Esophagus squamous epithelium (tissue), 5 donors: ENCODE measurements at regions of chr5 and their contacts with region 1.

Region 1: GRCh38 chr5:153496835-153497234 is 6.4 kb downstream of the GRIA1 start:
- DNase-seq: no peak
- H3K4me3 ChIP-seq: no peak overlapping the region
- H3K27ac ChIP-seq: no peak overlapping the region
- H3K4me1 ChIP-seq: no peaks in the 10 kb centered on the region
- H3K27me3 ChIP-seq: peaks cover 0 to 7% (median 0%) of the 10 kb centered on the region in 4 donors
- CTCF ChIP-seq: peak in 4 of 6 experiments; percentile 22 to 70 (median 44)
- POLR2A ChIP-seq: no peak

Region 2: DNA sequence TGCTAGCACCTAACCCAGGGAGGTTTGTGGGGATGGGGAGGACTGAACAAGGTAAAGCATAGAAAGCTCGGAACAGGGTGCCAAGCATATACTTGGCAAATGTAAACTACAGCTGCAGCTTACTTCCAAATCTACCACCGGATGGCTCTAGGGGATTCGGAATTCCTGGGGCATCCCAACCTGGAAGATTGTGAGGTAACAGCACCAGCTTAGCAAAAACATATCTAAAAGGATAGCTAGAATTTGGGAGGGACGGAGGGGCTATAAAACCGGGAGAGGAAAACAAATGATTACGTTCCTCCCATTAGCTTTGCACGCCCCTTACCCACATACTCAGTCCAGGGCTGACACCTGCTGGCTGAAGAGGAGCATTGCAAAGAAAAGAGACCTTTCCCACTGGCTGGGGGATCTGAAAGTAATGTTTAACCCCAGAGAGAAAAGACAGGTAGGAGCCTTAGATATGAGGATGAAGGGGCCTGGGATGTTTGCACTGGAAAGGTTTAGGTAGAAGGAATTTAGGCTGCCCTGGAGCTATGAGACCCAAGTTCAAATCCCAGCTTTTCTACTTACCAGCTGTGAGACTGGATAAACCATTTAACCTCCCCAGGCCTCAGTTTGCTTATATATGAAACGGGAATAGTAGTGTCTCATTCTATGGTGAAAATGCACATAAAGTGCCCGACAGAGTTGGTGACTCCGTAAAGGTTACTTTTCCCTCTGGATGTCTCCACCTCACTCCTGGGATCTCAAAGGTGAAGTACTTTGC is 468.2 kb after region 1 on chr5:
- intact Hi-C with region 1: loop called (anchors 10 kb)
- DNase-seq: no peak
- H3K4me3 ChIP-seq: no peak overlapping the region
- H3K27ac ChIP-seq: no peak overlapping the region
- H3K4me1 ChIP-seq: peaks cover 0 to 3% (median 0%) of the 10 kb centered on the region in 3 donors
- H3K27me3 ChIP-seq: peaks cover 0 to 8% (median 0%) of the 10 kb centered on the region in 4 donors
- CTCF ChIP-seq: peak; percentile 45 to 84 (median 78)
- POLR2A ChIP-seq: no peak